ENCODE measurements at regions of chr2 and their contacts with region 1.

Region 1: DNA sequence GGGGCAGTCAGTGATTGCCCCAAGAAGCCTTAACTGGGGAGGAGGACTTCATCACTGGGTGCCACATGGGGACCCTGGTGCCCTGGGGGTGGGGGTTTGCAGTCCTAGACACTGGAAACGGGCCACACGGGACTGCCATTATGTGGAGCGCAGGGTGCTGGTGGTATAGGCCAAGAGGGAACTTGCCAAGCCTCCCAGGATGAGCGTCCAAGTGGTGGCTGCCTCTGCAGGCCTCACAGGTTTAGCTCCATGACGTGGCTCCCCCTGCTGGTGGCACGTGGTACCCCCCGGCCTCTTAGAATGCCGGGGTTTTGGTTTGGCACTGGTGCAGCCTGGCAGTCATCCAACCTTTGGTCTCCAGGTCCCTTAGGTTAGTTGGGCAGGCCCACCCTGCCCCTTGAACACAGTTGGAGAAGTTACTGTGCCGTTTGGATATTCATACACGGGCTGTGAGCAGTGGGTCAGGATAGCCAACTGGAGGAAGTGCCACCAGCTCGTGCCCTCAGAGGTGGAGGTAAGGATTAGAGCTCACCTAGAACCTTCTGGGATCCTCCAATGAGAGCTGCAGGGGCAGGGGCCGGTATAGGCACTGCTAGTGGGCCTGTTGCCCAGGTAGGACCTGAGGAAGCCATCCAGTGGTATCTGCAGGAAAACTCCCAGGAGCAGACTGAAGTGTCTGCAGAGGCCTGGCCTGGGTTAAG is 5.6 kb downstream of the PTMA start:
- DNase-seq: peak; percentile 96
- ATAC-seq: peak; percentile 45
- H3K4me3 Mint-ChIP-seq: peak overlapping the region; percentile 55
- H3K27ac Mint-ChIP-seq: peak overlapping the region; percentile 94
- H3K4me1 Mint-ChIP-seq: peaks cover 35% of the 10 kb centered on the region
- H3K27me3 Mint-ChIP-seq: no peaks in the 10 kb centered on the region
- CTCF ChIP-seq: peak; percentile 93

Region 2: DNA sequence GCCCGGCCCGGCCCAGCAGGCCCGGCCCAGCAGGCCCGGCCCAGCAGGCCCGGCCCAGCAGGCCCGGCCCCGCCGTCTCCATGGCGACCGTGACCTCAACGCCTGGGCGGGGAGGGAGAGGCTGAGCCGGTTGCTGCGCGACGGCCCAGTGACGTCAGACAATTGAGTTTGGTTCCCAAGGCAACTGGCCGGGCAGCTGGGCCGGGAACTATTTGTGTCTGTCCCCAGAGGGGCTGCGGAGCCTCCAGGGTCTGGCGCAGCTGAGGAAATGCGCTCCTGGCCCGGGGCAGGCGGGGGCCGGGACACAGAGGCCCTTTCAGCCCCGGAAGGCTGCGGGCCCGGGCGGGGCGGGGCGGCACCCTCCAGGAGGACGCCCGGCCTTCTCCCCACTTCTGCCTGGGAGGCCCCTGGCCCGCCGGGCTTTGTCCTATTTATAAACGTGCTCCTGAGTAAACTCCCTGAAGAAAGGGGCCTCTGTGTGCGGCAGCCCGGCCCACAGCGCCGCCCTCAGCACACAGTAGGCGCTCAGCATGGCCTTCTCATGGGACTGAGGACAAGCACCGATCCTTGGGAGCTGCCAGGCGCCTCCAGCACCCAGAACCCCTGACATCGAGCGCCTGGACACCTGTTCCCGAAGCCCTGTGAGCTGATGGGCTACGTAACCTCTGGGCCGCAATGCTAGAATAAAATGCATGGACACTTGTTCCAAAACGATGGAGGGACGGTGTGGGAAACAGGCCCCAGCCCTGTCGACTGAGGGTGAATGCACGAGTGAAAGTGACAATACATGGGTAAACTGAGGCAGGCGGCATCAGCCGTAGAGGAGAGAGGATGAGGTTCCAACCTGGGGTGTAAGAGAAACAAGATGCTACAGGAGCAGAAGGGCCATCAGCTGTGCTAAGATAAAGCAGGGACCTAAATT is 108.9 kb before region 1 on chr2:
- CTCF ChIA-PET with region 1: interaction called, 165 read pairs
- POLR2A ChIA-PET with region 1: interaction called, 166 read pairs
- intact Hi-C with region 1: no loop called
- DNase-seq: peak; percentile 96
- ATAC-seq: peak; percentile 77
- H3K4me3 Mint-ChIP-seq: peak overlapping the region; percentile 50
- H3K27ac Mint-ChIP-seq: no peak overlapping the region
- H3K4me1 Mint-ChIP-seq: peaks cover 14% of the 10 kb centered on the region
- H3K27me3 Mint-ChIP-seq: peaks cover 4% of the 10 kb centered on the region
- CTCF ChIP-seq: no peak

Region 3: DNA sequence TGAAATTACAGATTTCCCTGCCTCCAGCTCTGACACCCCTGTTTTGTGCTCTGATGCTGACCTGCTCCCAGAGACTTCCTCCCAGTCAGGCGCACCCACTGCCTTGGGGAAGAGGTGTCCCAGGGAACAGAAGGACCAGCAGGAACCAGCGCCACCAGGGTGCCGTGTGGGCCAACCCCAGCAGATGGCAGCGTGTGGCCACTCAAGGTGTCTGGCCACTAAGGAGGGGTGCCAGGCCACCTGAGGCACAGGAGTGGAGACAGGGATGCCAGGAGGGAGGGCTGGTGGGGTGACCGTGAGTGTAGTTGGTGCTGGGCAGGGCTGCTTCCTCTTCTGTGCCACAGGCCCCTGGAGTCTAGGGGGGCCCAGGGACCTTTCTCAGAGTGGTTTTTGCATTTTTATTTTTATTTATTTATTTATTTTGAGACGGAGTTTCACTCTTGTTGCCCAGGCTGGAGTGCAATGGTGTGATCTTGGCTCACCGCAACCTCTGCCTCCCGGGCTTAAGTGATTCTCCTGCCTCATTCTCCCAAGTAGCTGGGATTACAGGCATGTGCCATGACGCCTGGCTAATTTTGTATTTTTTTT is 65.2 kb before region 1 on chr2:
- CTCF ChIA-PET with region 1: interaction called, 29 read pairs
- POLR2A ChIA-PET with region 1: interaction called, 3 read pairs
- intact Hi-C with region 1: no loop called
- DNase-seq: peak; percentile 81
- ATAC-seq: peak; percentile 99
- H3K4me3 Mint-ChIP-seq: no peak overlapping the region
- H3K27ac Mint-ChIP-seq: no peak overlapping the region
- H3K4me1 Mint-ChIP-seq: peaks cover 2% of the 10 kb centered on the region
- H3K27me3 Mint-ChIP-seq: no peaks in the 10 kb centered on the region
- CTCF ChIP-seq: peak; percentile 73

Region 4: DNA sequence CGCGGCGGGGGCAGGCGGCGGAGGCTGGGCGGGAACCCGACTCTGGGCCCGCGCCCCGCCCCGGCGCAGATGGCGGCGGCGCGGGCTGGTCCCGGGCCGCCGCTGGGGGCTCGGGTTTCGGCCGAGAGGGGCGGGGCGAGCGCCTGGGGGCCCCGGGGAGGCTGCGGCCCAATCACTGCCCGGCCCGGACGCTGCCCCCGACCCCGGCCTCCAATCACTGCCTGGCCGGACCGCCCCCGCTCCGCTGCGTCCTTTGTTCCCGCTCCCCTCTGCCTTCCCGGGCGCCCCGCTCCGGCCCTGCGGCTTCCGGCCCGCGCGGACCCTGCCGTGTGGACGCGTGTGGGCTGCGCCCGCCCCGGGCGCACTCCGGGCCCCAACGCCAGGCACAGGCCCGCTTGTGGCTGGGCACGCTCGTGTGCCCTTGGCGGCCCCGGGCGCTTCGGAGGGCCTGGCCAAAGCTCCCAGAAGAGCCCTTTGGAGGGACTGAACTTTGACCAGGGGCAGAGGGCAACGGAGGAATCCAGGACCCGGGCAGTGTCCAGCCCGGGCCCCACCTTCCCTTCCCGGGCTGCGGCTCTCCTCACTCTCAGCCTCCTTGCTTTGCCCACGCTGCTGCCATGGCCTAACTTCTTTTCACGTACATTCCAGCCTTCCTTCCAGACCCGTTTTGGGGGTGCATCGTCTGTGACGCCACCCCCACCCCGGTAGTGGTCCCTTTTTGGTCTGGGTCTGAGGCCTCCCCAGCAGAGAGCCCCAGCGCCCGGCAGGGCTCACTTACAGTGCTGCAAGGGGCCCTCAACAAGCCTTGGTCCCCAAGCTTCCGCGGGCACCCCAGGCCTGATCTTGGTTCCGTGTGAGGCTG is 32.7 kb before region 1 on chr2:
- CTCF ChIA-PET with region 1: interaction called, 385 read pairs
- POLR2A ChIA-PET with region 1: interaction called, 81 read pairs
- intact Hi-C with region 1: loop called (anchors 1 kb)
- DNase-seq: no peak
- ATAC-seq: peak; percentile 21
- H3K4me3 Mint-ChIP-seq: peak overlapping the region; percentile 47
- H3K27ac Mint-ChIP-seq: peak overlapping the region; percentile 34
- H3K4me1 Mint-ChIP-seq: peaks cover 3% of the 10 kb centered on the region
- H3K27me3 Mint-ChIP-seq: peaks cover 19% of the 10 kb centered on the region
- CTCF ChIP-seq: no peak

Region 5: GRCh38 chr2:231696007-231696371 is 17.9 kb before region 1 on chr2:
- CTCF ChIA-PET with region 1: interaction called, 176 read pairs
- POLR2A ChIA-PET with region 1: interaction called, 15 read pairs
- intact Hi-C with region 1: no loop called
- DNase-seq: no peak
- ATAC-seq: no peak
- H3K4me3 Mint-ChIP-seq: no peak overlapping the region
- H3K27ac Mint-ChIP-seq: no peak overlapping the region
- H3K4me1 Mint-ChIP-seq: no peaks in the 10 kb centered on the region
- H3K27me3 Mint-ChIP-seq: no peaks in the 10 kb centered on the region
- CTCF ChIP-seq: no peak

Region 6: DNA sequence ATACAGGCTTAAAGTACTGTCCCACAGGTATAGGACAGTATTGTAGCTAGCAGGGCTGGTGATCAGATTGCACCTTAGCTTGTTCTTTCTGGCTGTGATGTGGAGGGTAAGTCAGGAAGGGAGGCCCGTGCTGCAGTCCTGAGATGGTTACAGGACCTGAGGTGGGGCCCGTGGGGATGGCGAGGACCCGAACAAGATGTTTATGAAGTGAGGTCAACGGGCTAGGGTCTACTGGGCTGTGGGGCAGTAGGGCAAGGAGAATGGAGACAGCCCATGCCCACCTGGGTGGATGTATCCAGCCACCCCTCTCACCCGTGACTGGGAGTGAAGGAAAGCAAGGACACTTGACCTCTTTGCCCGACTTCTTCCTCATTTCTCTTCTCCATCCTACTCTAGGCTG is 12.3 kb after region 1 on chr2:
- CTCF ChIA-PET with region 1: interaction called, 53 read pairs
- POLR2A ChIA-PET with region 1: interaction called, 12 read pairs
- intact Hi-C with region 1: no loop called
- DNase-seq: no peak
- ATAC-seq: no peak
- H3K4me3 Mint-ChIP-seq: no peak overlapping the region
- H3K27ac Mint-ChIP-seq: no peak overlapping the region
- H3K4me1 Mint-ChIP-seq: no peaks in the 10 kb centered on the region
- H3K27me3 Mint-ChIP-seq: no peaks in the 10 kb centered on the region
- CTCF ChIP-seq: no peak

Region 7: GRCh38 chr2:231780909-231781797 is 67.3 kb after region 1 on chr2 and contains the start of gene PDE6D:
- CTCF ChIA-PET with region 1: interaction called, 10 read pairs
- POLR2A ChIA-PET with region 1: interaction called, 15 read pairs
- intact Hi-C with region 1: no loop called
- DNase-seq: peak; percentile 98
- ATAC-seq: peak; percentile 90
- H3K4me3 Mint-ChIP-seq: peak within 1 kb of the TSS; percentile 86
- H3K27ac Mint-ChIP-seq: peak within 1 kb of the TSS; percentile 95
- H3K4me1 Mint-ChIP-seq: peaks cover 50% of the 10 kb centered on the region
- H3K27me3 Mint-ChIP-seq: no peaks in the 10 kb centered on the region
- CTCF ChIP-seq: no peak
- total RNA-seq, gene PDE6D: 22.8 to 23.5 TPM

Measured in activated CD8-positive, alpha-beta T cell treated with anti-CD3 and anti-CD28 coated beads for 36 hours (primary cell).